Activated B cell treated with CpG ODN at 0.5 μM for 24 hours (primary cell): ENCODE measurements at regions of chr5 and their contacts with region 1.

Region 1: DNA sequence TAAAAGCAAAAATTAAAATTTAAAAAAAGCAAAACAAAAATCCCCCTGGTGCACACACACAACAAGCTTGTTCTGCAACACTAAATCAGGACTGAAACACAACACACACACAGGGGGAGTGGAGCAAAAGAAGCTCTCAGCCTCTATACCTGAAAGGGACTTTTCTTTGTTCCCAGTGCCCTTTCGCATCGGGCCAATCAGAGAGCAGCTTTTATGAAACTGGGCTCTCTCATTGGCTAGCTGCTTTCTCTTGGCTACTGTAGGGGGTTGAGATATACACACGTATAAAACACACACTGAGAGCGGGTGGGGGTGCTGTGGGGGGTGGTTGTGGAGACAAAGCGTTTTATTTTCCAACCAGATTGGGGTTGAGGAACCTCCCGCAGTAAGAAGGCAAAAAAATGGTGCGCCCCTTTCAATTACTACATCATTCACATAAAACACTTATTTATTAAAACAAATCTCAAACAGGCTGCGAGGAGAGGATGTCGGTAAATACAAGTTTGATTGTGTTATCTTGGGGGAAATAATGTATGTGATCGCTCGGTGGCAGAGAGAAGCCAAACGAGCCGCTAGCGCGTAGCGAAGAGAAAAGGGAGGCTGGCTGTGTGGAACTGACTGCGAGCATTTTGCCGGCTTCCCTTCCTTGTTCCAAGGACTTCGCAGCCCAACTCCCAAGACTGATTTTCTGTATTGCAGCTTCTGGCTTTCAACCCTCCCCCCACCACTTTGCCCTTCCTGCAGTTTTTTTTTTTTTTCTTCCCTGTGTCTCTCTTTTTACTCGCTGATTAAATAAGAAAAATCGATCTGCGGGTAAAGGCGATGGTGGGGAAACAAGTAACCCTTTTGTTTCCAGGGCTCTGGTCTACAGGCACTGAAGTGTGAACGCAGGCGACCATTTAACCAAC is 2.5 kb upstream of the ZNF608 start:
- DNase-seq: peak; percentile 37
- ATAC-seq: peak; percentile 71
- H3K4me3 Mint-ChIP-seq: no peak overlapping the region
- H3K27ac Mint-ChIP-seq: no peak overlapping the region
- H3K4me1 Mint-ChIP-seq: peaks cover 17% of the 10 kb centered on the region
- H3K27me3 Mint-ChIP-seq: no peaks in the 10 kb centered on the region
- CTCF ChIP-seq: no peak

Region 2: GRCh38 chr5:123937230-123937629 is 811.7 kb before region 1 on chr5:
- CTCF ChIA-PET with region 1: interaction called, 3 read pairs
- POLR2A ChIA-PET with region 1: no interaction called
- intact Hi-C with region 1: loop called (anchors 5 kb)
- DNase-seq: peak; percentile 24
- ATAC-seq: no peak
- H3K4me3 Mint-ChIP-seq: no peak overlapping the region
- H3K27ac Mint-ChIP-seq: no peak overlapping the region
- H3K4me1 Mint-ChIP-seq: peaks cover 5% of the 10 kb centered on the region
- H3K27me3 Mint-ChIP-seq: no peaks in the 10 kb centered on the region
- CTCF ChIP-seq: peak; percentile 53

Region 3: GRCh38 chr5:124453221-124454051 is 295.5 kb before region 1 on chr5:
- CTCF ChIA-PET with region 1: no interaction called
- POLR2A ChIA-PET with region 1: interaction called, 5 read pairs
- intact Hi-C with region 1: loop called (anchors 2 kb)
- DNase-seq: peak; percentile 31
- ATAC-seq: peak; percentile 95
- H3K4me3 Mint-ChIP-seq: peak overlapping the region; percentile 67
- H3K27ac Mint-ChIP-seq: peak overlapping the region; percentile 79
- H3K4me1 Mint-ChIP-seq: peaks cover 43% of the 10 kb centered on the region
- H3K27me3 Mint-ChIP-seq: no peaks in the 10 kb centered on the region
- CTCF ChIP-seq: no peak

Region 4: DNA sequence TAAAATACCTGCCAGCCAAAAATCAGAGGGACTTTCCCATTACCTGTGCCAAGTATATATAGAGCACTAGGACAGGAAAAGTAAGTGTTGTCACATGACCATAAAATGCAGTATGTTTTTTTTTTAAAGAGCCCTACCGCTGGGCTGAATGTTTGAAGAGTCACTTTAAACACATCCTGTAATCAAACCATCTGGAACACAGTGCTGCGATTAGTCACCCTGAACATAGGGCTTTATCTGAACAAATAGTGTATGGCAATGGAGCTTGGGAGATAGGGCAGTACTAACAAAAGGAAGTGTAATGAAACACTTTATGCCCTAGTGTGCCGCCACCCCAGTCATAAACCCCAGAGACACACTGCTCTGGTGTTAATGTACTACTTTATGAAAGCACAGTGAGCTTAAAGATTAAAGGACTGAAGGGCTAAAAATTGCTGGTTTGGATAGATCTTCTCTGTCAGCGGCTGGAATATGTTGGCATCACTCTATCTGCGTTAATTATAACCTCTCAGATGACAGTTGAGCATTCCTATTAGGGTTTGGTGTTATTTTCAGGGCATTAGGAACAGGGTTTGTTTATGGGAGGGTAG is 92.9 kb before region 1 on chr5:
- CTCF ChIA-PET with region 1: interaction called, 10 read pairs
- POLR2A ChIA-PET with region 1: interaction called, 26 read pairs
- intact Hi-C with region 1: no loop called
- DNase-seq: no peak
- ATAC-seq: peak; percentile 63
- H3K4me3 Mint-ChIP-seq: no peak overlapping the region
- H3K27ac Mint-ChIP-seq: no peak overlapping the region
- H3K4me1 Mint-ChIP-seq: peaks cover 38% of the 10 kb centered on the region
- H3K27me3 Mint-ChIP-seq: no peaks in the 10 kb centered on the region
- CTCF ChIP-seq: no peak

Region 5: GRCh38 chr5:124859027-124859426 is 110.1 kb after region 1 on chr5:
- CTCF ChIA-PET with region 1: interaction called, 3 read pairs
- POLR2A ChIA-PET with region 1: interaction called, 12 read pairs
- intact Hi-C with region 1: no loop called
- DNase-seq: peak; percentile 26
- ATAC-seq: peak; percentile 95
- H3K4me3 Mint-ChIP-seq: no peak overlapping the region
- H3K27ac Mint-ChIP-seq: peak overlapping the region; percentile 46
- H3K4me1 Mint-ChIP-seq: peaks cover 17% of the 10 kb centered on the region
- H3K27me3 Mint-ChIP-seq: no peaks in the 10 kb centered on the region
- CTCF ChIP-seq: no peak

Region 6: DNA sequence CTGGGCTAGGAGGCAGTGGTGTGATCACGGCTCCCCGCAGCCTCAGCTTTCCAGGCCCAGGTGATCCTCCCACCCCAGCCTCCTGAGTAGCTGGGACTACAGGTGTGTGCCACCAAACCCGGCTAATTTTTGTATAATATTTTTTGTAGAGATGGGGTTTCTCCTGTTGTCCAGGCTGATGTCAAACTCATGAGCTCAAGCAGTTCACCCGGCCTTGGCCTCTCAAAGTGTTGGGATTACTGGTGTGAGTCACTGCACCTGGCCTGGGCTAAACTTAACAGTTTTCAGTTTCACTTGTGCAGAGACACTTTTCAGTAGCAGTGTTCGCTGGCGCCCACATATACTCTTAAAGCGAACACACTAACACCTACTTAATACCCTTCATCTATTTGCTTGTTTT is 203.1 kb after region 1 on chr5:
- CTCF ChIA-PET with region 1: no interaction called
- POLR2A ChIA-PET with region 1: interaction called, 25 read pairs
- intact Hi-C with region 1: no loop called
- DNase-seq: peak; percentile 25
- ATAC-seq: peak; percentile 82
- H3K4me3 Mint-ChIP-seq: no peak overlapping the region
- H3K27ac Mint-ChIP-seq: peak overlapping the region; percentile 78
- H3K4me1 Mint-ChIP-seq: peaks cover 21% of the 10 kb centered on the region
- H3K27me3 Mint-ChIP-seq: no peaks in the 10 kb centered on the region
- CTCF ChIP-seq: no peak

Region 7: DNA sequence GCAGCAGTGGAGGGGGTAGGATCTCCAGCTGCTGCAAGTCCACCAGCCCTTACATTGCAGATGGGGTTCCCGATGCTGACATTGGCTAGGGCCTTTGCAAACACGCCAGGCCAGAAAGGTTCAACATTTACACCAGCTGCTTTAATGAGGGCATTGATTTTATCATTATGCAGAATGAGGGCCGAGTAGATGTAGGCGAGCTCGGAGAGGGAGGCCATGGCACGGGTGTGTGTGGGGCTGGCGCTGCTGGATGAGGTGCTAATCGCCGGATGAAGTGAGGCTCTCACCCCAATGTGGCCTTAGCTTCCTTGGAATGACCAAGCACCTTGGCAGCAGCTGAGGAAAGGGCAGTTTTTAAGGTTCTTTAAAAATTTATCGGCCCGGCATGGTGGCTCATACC is 1879.2 kb after region 1 on chr5:
- CTCF ChIA-PET with region 1: no interaction called
- POLR2A ChIA-PET with region 1: no interaction called
- intact Hi-C with region 1: no loop called
- DNase-seq: no peak
- ATAC-seq: no peak
- H3K4me3 Mint-ChIP-seq: no peak overlapping the region
- H3K27ac Mint-ChIP-seq: no peak overlapping the region
- H3K4me1 Mint-ChIP-seq: no peaks in the 10 kb centered on the region
- H3K27me3 Mint-ChIP-seq: no peaks in the 10 kb centered on the region
- CTCF ChIP-seq: no peak